AG04450 (cell line): ENCODE measurements at regions of chr17 and their contacts with region 1.

Region 1: DNA sequence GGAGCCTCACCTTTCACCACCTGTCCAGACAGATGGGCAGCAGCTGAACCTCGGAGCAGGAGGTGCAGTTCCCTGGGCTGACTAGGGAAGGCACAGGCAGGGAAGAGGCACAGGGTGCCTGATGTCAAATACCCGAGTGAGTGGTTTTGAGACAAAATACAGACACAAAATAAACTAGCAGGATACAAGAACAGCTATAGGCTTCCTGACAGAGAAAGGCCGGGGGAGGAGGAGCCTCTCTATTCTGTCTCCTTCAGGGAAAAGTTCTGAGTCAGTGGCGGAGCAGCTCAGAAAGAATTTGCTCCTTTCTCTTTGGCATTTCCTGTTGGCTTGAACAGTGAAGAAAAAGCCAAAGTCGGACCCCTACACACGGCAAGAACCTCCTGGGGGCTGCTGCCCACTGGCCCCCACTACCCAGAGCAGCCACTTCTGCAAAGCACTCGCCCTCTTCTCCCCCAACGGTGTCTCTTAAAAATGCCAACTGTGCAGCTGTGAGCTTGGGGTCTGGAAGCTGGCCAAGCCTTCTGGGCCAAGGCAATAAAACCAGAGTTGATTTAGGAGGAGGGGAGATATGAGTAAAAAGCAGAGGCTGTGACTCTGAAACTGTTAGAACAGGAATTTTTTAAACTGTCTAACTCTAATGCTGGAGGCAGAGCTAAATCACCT is 14.4 kb upstream of the FAAP100 start:
- DNase-seq: peak; percentile 79
- H3K4me3 ChIP-seq: peak overlapping the region; percentile 44
- H3K27ac ChIP-seq: peak overlapping the region; percentile 89
- H3K27me3 ChIP-seq: no peaks in the 10 kb centered on the region
- CTCF ChIP-seq: no peak

Region 2: GRCh38 chr17:81519284-81519955 is 47.2 kb before region 1 on chr17:
- CTCF ChIA-PET with region 1: no interaction called
- POLR2A ChIA-PET with region 1: no interaction called
- DNase-seq: no peak
- H3K4me3 ChIP-seq: peak overlapping the region; percentile 51
- H3K27ac ChIP-seq: no peak overlapping the region
- H3K27me3 ChIP-seq: peaks cover 2% of the 10 kb centered on the region
- CTCF ChIP-seq: peak; percentile 12; the same call in 1 of the 2 replicates

Region 3: GRCh38 chr17:81576621-81577277 is 10.2 kb after region 1 on chr17:
- CTCF ChIA-PET with region 1: no interaction called
- POLR2A ChIA-PET with region 1: interaction called, 25 read pairs
- DNase-seq: no peak
- H3K4me3 ChIP-seq: peak overlapping the region; percentile 20; the same call in 1 of the 2 replicates
- H3K27ac ChIP-seq: peak overlapping the region; percentile 90
- H3K27me3 ChIP-seq: no peaks in the 10 kb centered on the region
- CTCF ChIP-seq: 0 out of 2 replicates have a peak, but pooled peaks have one; percentile 9

Region 4: GRCh38 chr17:81609541-81610311 is 43.1 kb after region 1 on chr17:
- CTCF ChIA-PET with region 1: no interaction called
- POLR2A ChIA-PET with region 1: no interaction called
- DNase-seq: no peak
- H3K4me3 ChIP-seq: no peak overlapping the region
- H3K27ac ChIP-seq: no peak overlapping the region
- H3K27me3 ChIP-seq: no peaks in the 10 kb centered on the region
- CTCF ChIP-seq: no peak

Region 5: DNA sequence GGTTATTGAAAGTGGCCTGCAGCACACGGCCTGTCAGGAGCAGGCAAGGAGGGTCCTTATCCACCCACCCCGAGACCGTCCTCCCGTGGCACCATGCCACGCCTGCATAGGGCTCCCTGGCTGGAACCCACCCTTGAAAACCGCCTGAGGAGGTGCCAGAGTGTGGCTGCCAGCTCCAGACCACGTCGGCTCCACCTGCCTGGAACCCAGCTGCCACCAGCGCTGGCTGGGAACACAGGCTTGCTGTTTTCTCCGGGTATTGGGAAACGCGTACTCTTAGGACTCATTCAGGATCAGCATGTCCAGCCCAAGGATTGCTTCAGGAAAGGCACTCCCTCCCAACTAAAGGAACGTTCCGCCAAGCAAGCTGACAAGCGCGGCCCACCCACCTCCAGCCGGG is 110.3 kb after region 1 on chr17:
- CTCF ChIA-PET with region 1: no interaction called
- POLR2A ChIA-PET with region 1: no interaction called
- DNase-seq: no peak
- H3K4me3 ChIP-seq: no peak overlapping the region
- H3K27ac ChIP-seq: no peak overlapping the region
- H3K27me3 ChIP-seq: no peaks in the 10 kb centered on the region
- CTCF ChIP-seq: no peak